Head of caudate nucleus (tissue), 42 donors: ENCODE measurements at regions of chr6 and their contacts with region 1.

Region 1: GRCh38 chr6:112300896-112301295 is 46.2 kb upstream of the RFPL4B start:
- DNase-seq: no peak

Region 2: DNA sequence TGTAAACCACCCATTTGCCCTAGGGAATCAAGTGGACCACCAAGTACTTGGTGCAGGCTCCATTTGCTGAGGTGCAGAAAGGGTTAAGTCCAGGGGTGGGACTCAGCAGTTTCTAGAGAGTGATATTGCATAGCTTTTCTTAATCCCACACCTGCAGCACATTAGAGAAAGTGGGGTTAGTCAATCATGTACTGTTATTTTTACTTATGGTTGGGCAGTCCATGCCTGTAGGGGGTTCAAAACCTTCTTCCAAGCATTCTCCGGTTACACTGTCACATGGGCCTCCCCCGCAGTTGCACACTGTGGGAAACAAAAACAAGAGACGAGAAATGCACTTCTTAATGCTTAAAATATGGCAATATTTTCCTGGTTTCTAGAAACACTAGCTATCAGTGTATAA is 112.0 kb before region 1 on chr6:
- intact Hi-C with region 1: loop called (anchors 5 kb)
- DNase-seq: no peak

Region 3: GRCh38 chr6:112223070-112223861 is 77.6 kb before region 1 on chr6:
- intact Hi-C with region 1: no loop called
- DNase-seq: no peak